CD4-positive, alpha-beta memory T cell (primary cell): ENCODE measurements at regions of chr19 and their contacts with region 1.

Region 1: DNA sequence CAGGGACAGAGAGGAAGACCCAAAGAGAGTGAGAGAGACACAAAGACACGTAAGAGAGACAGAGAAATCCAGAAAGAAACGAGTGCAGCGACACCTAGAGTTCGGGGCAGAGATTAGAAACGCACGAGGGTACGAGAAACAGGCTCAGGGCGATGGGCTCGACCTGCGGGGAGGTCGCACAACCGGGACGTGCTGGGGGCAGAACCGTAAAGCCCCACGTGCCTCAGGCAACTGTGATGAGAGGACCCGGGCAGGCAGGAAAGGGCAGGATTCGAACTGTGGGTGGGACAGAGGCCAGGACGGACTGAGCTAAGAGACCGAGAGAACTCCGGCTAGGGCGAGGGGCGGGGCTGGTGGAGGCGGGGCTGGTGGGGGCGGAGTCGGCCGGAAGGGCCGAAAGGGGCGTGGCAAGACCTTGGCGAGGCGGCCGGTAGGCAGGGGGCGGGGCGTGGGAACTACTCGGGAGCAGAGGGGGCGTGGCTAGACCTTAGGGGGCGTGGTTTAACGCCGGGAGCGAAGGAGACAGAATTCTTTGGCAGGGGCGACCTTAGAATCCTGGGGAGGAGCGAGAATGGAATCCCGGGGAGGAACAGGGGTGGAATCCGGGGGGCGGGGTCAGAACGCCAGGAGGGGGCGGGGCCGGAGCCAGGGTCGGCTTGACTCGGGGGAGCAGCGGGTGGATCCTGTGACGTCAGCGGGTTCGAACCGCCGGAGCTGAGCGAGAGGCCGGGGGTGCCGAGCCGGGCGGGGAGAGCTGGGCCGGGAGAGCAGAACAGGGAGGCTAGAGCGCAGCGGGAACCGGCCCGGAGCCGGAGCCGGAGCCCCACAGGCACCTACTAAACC is at the start of gene NECTIN2:
- DNase-seq: peak; percentile 62 to 77 (median 70)
- H3K4me3 ChIP-seq: peak within 1 kb of the TSS; percentile 37 to 38
- H3K4me3 Mint-ChIP-seq: peak within 1 kb of the TSS; percentile 86 to 96 (median 90)
- H3K27ac ChIP-seq: peak within 1 kb of the TSS; percentile 14
- H3K27ac Mint-ChIP-seq: peak within 1 kb of the TSS; percentile 72 to 95 (median 87)
- H3K4me1 ChIP-seq: peaks cover 37% of the 10 kb centered on the region
- H3K4me1 Mint-ChIP-seq: peaks cover 13 to 36% (median 28%) of the 10 kb centered on the region in 4 donors
- H3K27me3 ChIP-seq: peaks cover 9% of the 10 kb centered on the region
- H3K27me3 Mint-ChIP-seq: peaks cover 5 to 7% of the 10 kb centered on the region in 2 donors
- total RNA-seq, gene NECTIN2: 0.84 to 1.7 TPM

Region 2: DNA sequence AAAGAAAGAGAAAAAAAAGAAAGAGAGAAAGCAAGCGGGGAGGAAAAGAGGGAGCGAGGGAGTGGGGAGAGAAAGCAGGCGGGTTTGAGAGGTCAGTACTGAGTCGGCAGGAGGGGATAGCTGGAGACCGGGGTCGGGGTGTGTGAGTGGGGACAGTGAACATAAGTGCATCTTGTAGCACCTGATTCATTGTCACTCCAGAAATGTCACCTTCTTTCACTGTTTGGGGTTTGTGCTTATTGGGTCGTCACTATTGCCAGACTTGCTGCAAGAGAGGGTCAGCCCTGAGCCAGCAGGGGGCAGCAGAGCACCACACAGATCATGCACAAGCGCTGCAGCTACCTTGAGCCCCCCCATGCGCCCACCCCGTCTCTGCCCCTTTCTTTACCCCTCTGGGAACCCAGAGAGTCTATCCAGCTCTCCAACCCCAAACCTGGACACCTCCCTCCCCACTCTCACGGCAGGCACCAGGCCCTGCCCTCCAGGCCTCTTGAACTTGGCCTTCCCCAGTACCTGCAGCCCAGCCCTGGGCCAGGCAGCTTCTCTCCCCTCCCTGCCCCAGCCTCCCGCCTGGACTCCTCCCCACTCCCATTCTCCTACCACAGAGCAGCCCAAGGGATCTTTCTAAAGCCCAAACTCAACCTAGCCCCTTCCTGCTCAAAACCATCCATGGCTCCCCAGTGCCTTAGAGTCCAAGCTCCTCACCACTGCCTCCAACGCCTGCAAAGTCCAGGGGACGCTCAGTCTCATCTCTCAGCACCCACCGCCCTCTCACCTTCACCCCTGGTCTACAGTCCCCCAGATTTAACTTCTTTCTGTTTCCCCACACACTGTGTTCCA is 156.6 kb before region 1 on chr19:
- CTCF ChIA-PET with region 1: interaction called, 4 read pairs
- POLR2A ChIA-PET with region 1: interaction called, 4 read pairs
- intact Hi-C with region 1: loop called (anchors 1 kb)
- DNase-seq: peak; percentile 66 to 71 (median 68)
- H3K4me3 ChIP-seq: no peak overlapping the region
- H3K4me3 Mint-ChIP-seq: no peak overlapping the region
- H3K27ac ChIP-seq: no peak overlapping the region
- H3K27ac Mint-ChIP-seq: peak overlapping the region in 6 of 7 donors; percentile 8 to 80 (median 58)
- H3K4me1 ChIP-seq: peaks cover 22% of the 10 kb centered on the region
- H3K4me1 Mint-ChIP-seq: peaks cover 20 to 33% (median 26%) of the 10 kb centered on the region in 4 donors
- H3K27me3 ChIP-seq: no peaks in the 10 kb centered on the region
- H3K27me3 Mint-ChIP-seq: peaks cover 8 to 18% of the 10 kb centered on the region in 2 donors

Region 3: DNA sequence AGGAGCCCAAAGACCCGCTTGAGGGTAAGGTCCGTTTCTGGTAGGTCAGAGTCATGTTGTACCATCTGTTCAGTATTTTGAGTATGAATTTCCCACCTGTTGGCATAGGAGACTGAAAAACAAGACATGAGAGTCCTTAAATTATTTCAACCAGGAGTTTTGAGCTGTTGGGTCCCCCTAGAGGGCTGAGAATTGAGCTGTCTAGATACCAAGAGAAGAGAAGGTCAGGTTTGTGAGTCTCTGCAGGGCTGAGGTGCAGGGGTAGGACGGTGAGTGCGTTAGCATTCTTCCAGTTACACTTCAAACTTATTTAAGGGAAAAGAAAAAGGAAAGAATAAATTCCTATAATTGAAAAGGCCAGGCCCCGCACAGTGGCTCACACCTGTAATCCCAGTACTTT is 63.1 kb before region 1 on chr19:
- CTCF ChIA-PET with region 1: interaction called, 16 read pairs
- POLR2A ChIA-PET with region 1: no interaction called
- intact Hi-C with region 1: loop called (anchors 1 kb)
- DNase-seq: no peak
- H3K4me3 ChIP-seq: no peak overlapping the region
- H3K4me3 Mint-ChIP-seq: no peak overlapping the region
- H3K27ac ChIP-seq: no peak overlapping the region
- H3K27ac Mint-ChIP-seq: no peak overlapping the region
- H3K4me1 ChIP-seq: peaks cover 3% of the 10 kb centered on the region
- H3K4me1 Mint-ChIP-seq: peaks cover 4 to 7% (median 6%) of the 10 kb centered on the region in 4 donors
- H3K27me3 ChIP-seq: no peaks in the 10 kb centered on the region
- H3K27me3 Mint-ChIP-seq: peaks cover 0 to 7% of the 10 kb centered on the region in 2 donors

Region 4: GRCh38 chr19:44800461-44800860 is 45.4 kb before region 1 on chr19:
- CTCF ChIA-PET with region 1: interaction called, 7 read pairs
- POLR2A ChIA-PET with region 1: no interaction called
- intact Hi-C with region 1: loop called (anchors 1 kb)
- DNase-seq: peak; percentile 70 to 78 (median 73)
- H3K4me3 ChIP-seq: no peak overlapping the region
- H3K4me3 Mint-ChIP-seq: no peak overlapping the region
- H3K27ac ChIP-seq: no peak overlapping the region
- H3K27ac Mint-ChIP-seq: peak overlapping the region in 1 of 7 donors; percentile 56
- H3K4me1 ChIP-seq: peaks cover 15% of the 10 kb centered on the region
- H3K4me1 Mint-ChIP-seq: peaks cover 10 to 20% (median 14%) of the 10 kb centered on the region in 4 donors
- H3K27me3 ChIP-seq: no peaks in the 10 kb centered on the region
- H3K27me3 Mint-ChIP-seq: peaks cover 0 to 2% of the 10 kb centered on the region in 2 donors

Region 5: DNA sequence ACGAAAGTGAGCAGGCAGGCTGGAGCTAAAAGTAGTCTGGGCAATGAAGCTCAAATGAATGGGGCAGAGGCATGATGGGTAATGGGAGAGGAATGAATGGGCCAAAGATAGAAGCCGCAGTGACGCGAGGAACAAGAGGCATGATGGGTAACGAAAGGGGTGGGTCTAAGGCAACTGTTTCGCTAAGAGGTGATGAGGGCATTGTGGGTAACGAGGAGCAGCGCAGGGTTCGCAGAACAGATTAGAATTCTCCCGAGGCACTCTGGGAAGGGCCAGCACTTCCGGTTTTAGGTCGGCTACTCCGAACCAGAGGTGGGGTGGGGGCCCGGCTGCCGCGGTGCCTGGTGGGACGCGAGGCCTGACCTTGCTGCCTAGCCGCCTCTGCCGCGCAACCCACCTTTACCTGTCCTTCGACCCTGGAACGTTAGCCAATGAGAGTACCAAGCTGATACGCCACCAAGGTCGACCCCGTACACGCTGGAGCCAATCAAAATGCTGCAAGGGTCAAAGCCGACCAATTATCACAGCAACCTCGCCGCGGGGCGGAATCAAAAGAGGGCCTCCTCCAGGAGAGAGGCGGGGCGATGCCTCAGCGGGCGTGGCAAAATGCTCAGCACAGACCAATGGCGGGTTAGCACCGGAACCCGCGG is 44.7 kb after region 1 on chr19:
- CTCF ChIA-PET with region 1: no interaction called
- POLR2A ChIA-PET with region 1: no interaction called
- intact Hi-C with region 1: loop called (anchors 2 kb)
- DNase-seq: peak; percentile 100
- H3K4me3 ChIP-seq: peak overlapping the region; percentile 36 to 59
- H3K4me3 Mint-ChIP-seq: peak overlapping the region; percentile 80 to 95 (median 89)
- H3K27ac ChIP-seq: peak overlapping the region; percentile 83
- H3K27ac Mint-ChIP-seq: peak overlapping the region; percentile 83 to 97 (median 95)
- H3K4me1 ChIP-seq: peaks cover 22% of the 10 kb centered on the region
- H3K4me1 Mint-ChIP-seq: peaks cover 19 to 35% (median 28%) of the 10 kb centered on the region in 4 donors
- H3K27me3 ChIP-seq: no peaks in the 10 kb centered on the region
- H3K27me3 Mint-ChIP-seq: no peaks in the 10 kb centered on the region

Region 6: DNA sequence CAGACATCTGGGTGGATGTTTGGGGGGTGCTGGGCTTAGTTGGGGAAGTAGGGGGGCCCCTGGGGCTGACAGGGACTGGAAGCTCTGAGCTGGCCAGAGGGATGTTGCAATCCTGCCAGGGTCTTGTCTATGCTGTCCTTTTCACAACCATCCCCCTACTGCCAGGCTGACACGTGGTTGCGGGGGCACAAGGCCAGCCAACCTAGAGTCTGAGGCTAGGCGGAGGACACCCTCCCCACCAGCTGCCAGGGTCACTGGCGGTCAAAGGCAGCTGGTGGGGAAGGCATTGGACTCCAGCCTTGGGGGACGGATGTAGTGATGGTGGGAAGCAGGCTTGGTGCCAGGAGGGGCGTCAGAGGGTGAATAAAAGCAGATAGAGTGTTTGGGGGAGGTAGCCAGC is 67.0 kb after region 1 on chr19:
- CTCF ChIA-PET with region 1: no interaction called
- POLR2A ChIA-PET with region 1: no interaction called
- intact Hi-C with region 1: no loop called
- DNase-seq: no peak
- H3K4me3 ChIP-seq: no peak overlapping the region
- H3K4me3 Mint-ChIP-seq: peak overlapping the region in 2 of 8 donors; percentile 59 to 71
- H3K27ac ChIP-seq: no peak overlapping the region
- H3K27ac Mint-ChIP-seq: no peak overlapping the region
- H3K4me1 ChIP-seq: peaks cover 6% of the 10 kb centered on the region
- H3K4me1 Mint-ChIP-seq: peaks cover 5 to 9% (median 7%) of the 10 kb centered on the region in 4 donors
- H3K27me3 ChIP-seq: no peaks in the 10 kb centered on the region
- H3K27me3 Mint-ChIP-seq: peaks cover 18 to 24% of the 10 kb centered on the region in 2 donors